Activated T-helper 1 cell treated with anti-CD3 and anti-CD28 coated beads, Interleukin-12 subunit alpha, Interleukin-12 subunit beta, Interleukin-2, Interleukin-4 antibody, amounts not matched to agents 30 ng/mL and 10 ng/mL and 1 ng/mL, durations not matched to agents 14 hours and 24 hours and 36 hours (primary cell): ENCODE measurements at regions of chr20 and their contacts with region 1.

Region 1: GRCh38 chr20:34922654-34923424 is 32.8 kb downstream of the GSS start:
- DNase-seq: no peak
- H3K4me3 Mint-ChIP-seq: no peak overlapping the region
- H3K27ac Mint-ChIP-seq: no peak overlapping the region
- H3K4me1 Mint-ChIP-seq: peaks cover 39% of the 10 kb centered on the region
- H3K27me3 Mint-ChIP-seq: no peaks in the 10 kb centered on the region

Region 2: GRCh38 chr20:34891166-34892062 is 31.4 kb before region 1 on chr20:
- intact Hi-C with region 1: loop called (anchors 1 kb)
- DNase-seq: no peak
- H3K4me3 Mint-ChIP-seq: peak overlapping the region; percentile 43
- H3K27ac Mint-ChIP-seq: peak overlapping the region; percentile 76
- H3K4me1 Mint-ChIP-seq: peaks cover 59% of the 10 kb centered on the region
- H3K27me3 Mint-ChIP-seq: no peaks in the 10 kb centered on the region